ENCODE measurements at regions of chr19 and their contacts with region 1.

Region 1: DNA sequence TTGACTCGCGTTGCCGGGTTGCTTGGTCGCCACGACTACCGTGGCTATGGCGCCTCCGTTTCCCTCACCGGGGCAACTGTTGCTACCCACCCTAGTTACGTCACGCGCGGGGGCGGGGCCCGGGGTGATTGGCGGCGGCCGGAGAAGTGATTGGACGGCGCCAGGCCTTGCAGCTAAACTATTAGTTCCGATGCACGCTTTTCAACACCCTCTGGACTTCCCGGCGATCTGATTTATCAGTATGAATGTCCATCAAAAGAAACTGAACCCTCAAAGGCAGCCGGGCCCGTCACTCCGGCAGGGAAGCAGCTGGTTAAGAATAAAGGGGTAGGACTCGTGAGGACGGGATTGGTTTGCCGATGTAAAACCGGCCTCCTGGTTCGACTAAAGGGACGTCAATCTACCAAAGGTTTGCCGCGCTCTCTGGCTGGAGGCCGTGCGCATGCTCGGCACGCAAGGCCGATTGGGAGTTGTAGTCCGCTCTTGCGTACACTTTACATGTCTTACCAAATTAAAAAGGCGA is at the start of gene RFX1:
- DNase-seq: peak; percentile 100
- H3K4me3 ChIP-seq: peak within 1 kb of the TSS; percentile 91
- H3K4me3 Mint-ChIP-seq: peak within 1 kb of the TSS; percentile 90 to 98 (median 96)
- H3K27ac ChIP-seq: peak within 1 kb of the TSS; percentile 100
- H3K27ac Mint-ChIP-seq: peak within 1 kb of the TSS; percentile 96 to 100 (median 100)
- H3K4me1 ChIP-seq: peaks cover 35% of the 10 kb centered on the region
- H3K4me1 Mint-ChIP-seq: peaks cover 34 to 44% (median 34%) of the 10 kb centered on the region in 3 donors
- H3K27me3 ChIP-seq: no peaks in the 10 kb centered on the region
- H3K27me3 Mint-ChIP-seq: peaks cover 0 to 3% of the 10 kb centered on the region in 2 donors
- total RNA-seq, gene RFX1: 13.0 to 13.6 TPM

Region 2: GRCh38 chr19:13978347-13978733 is 28.0 kb before region 1 on chr19:
- CTCF ChIA-PET with region 1: no interaction called
- POLR2A ChIA-PET with region 1: interaction called, 15 read pairs
- DNase-seq: peak in 2 of 5 donors; percentile 37 to 66
- H3K4me3 ChIP-seq: no peak overlapping the region
- H3K4me3 Mint-ChIP-seq: peak overlapping the region in 5 of 7 donors; percentile 3 to 57 (median 34)
- H3K27ac ChIP-seq: no peak overlapping the region
- H3K27ac Mint-ChIP-seq: peak overlapping the region in 5 of 8 donors; percentile 41 to 78 (median 70)
- H3K4me1 ChIP-seq: peaks cover 36% of the 10 kb centered on the region
- H3K4me1 Mint-ChIP-seq: peaks cover 14 to 45% (median 15%) of the 10 kb centered on the region in 3 donors
- H3K27me3 ChIP-seq: no peaks in the 10 kb centered on the region
- H3K27me3 Mint-ChIP-seq: no peaks in the 10 kb centered on the region

Region 3: GRCh38 chr19:14031719-14032480 is 25.6 kb after region 1 on chr19 and contains the start of gene IL27RA:
- CTCF ChIA-PET with region 1: interaction called, 19 read pairs
- POLR2A ChIA-PET with region 1: interaction called, 47 read pairs
- DNase-seq: peak; percentile 70 to 92 (median 83)
- H3K4me3 ChIP-seq: peak within 1 kb of the TSS; percentile 69
- H3K4me3 Mint-ChIP-seq: peak within 1 kb of the TSS; percentile 86 to 99 (median 94)
- H3K27ac ChIP-seq: peak within 1 kb of the TSS; percentile 97
- H3K27ac Mint-ChIP-seq: peak within 1 kb of the TSS; percentile 86 to 99 (median 98)
- H3K4me1 ChIP-seq: peaks cover 24% of the 10 kb centered on the region
- H3K4me1 Mint-ChIP-seq: peaks cover 23 to 43% (median 37%) of the 10 kb centered on the region in 3 donors
- H3K27me3 ChIP-seq: no peaks in the 10 kb centered on the region
- H3K27me3 Mint-ChIP-seq: no peaks in the 10 kb centered on the region
- total RNA-seq, gene IL27RA: 71.4 to 73.6 TPM

Region 4: DNA sequence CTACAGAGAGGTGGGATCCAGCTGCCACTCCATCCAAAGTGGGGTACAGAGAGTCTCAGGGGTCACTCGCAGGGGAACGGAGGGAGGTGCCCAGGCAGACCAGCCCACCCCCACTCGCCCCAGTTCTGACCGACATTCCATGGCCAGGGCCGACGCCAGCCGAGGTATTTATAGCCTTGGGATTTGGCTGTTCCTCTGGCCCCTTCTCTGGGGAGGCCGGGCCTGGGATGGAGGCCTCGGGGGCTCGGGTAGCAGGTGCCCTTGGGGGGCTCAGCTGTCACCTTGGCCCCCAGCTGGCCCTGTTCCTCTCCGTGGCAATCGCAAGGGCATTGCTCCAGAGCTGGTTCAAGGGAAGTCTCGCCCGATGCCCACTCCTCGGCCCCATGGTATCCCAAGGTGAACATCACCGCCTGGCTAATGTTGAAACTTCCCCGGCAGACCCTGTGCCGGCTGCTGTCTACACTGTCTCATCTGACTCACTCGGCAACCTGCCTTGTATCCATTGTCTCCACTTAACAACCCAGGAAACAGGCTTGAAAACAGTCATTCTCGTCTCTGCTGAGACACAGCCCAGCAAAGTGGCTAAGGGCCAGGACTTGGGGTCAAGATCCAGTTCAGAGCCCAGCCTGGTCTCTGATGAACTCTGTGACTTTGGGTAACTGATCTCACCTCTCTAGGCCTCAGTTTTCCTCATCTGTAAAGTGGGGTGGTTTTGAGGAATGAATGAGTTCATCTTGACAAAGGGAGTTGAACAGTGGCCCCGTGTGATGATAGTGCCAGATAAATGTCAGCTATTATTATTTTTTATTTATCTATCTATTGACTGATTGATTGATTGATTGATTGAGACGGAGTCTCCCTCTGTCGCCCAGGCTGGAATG is 101.5 kb after region 1 on chr19:
- CTCF ChIA-PET with region 1: no interaction called
- POLR2A ChIA-PET with region 1: no interaction called
- DNase-seq: no peak
- H3K4me3 ChIP-seq: no peak overlapping the region
- H3K4me3 Mint-ChIP-seq: no peak overlapping the region
- H3K27ac ChIP-seq: no peak overlapping the region
- H3K27ac Mint-ChIP-seq: peak overlapping the region in 1 of 8 donors; percentile 58
- H3K4me1 ChIP-seq: peaks cover 5% of the 10 kb centered on the region
- H3K4me1 Mint-ChIP-seq: peaks cover 0 to 16% (median 1%) of the 10 kb centered on the region in 3 donors
- H3K27me3 ChIP-seq: no peaks in the 10 kb centered on the region
- H3K27me3 Mint-ChIP-seq: no peaks in the 10 kb centered on the region

Measured in CD8-positive, alpha-beta memory T cell (primary cell).